ENCODE measurements at regions of chrX and their contacts with region 1.

Region 1: GRCh38 chrX:124211312-124211942 is 121.0 kb upstream of the TEX13D start:
- DNase-seq: peak; percentile 3
- H3K4me3 Mint-ChIP-seq: no peak overlapping the region
- H3K27ac Mint-ChIP-seq: no peak overlapping the region
- H3K4me1 Mint-ChIP-seq: peaks cover 44% of the 10 kb centered on the region
- H3K27me3 Mint-ChIP-seq: peaks cover 5% of the 10 kb centered on the region

Region 2: DNA sequence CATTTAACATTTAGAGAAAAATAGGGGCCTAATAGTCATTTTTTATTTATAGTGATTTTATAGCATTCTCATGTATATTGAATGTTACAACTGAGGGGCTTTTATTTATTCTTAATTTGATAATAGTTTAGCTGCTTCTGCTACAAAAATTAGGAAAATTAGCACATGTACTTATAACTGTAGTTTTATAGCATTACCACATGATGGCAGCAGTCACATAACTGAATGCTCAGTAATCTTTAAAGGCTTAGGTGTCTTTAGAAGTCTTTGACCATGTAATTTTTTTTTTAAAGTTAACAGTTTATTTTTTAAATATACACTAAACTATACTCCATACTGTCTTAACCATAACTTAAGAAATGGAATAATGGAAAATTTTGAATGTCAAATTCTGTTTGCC is 113.3 kb before region 1 on chrX:
- intact Hi-C with region 1: loop called (anchors 5 kb)
- DNase-seq: no peak
- H3K4me3 Mint-ChIP-seq: no peak overlapping the region
- H3K27ac Mint-ChIP-seq: no peak overlapping the region
- H3K4me1 Mint-ChIP-seq: no peaks in the 10 kb centered on the region
- H3K27me3 Mint-ChIP-seq: no peaks in the 10 kb centered on the region

Region 3: GRCh38 chrX:124257924-124258702 is 46.7 kb after region 1 on chrX:
- intact Hi-C with region 1: loop called (anchors 2 kb)
- DNase-seq: no peak
- H3K4me3 Mint-ChIP-seq: no peak overlapping the region
- H3K27ac Mint-ChIP-seq: peak overlapping the region; percentile 27
- H3K4me1 Mint-ChIP-seq: peaks cover 13% of the 10 kb centered on the region
- H3K27me3 Mint-ChIP-seq: no peaks in the 10 kb centered on the region

Region 4: DNA sequence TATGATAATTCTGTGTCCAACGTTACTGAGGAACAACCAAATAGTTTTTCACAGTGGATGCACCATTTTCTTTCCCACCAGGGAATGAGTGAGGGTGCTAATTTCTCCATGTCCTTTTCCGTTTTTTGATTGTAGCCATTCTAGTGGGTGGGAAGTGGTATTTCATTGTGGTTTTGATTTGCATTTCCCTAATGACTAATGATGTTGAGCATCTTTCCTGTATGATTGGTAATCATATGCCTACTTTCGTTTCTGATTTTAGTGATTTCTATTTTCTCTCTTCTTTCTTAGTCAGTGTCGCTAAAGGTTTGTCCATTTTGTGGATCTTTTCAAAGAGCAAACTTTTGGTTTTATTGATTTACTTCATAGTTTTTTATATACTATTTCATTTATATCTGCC is 89.0 kb after region 1 on chrX:
- intact Hi-C with region 1: loop called (anchors 1 kb)
- DNase-seq: no peak
- H3K4me3 Mint-ChIP-seq: peak overlapping the region; percentile 9
- H3K27ac Mint-ChIP-seq: peak overlapping the region; percentile 68
- H3K4me1 Mint-ChIP-seq: peaks cover 17% of the 10 kb centered on the region
- H3K27me3 Mint-ChIP-seq: no peaks in the 10 kb centered on the region

Measured in activated T-helper 1 cell treated with anti-CD3 and anti-CD28 coated beads, Interleukin-12 subunit alpha, Interleukin-12 subunit beta, Interleukin-2, Interleukin-4 antibody, amounts not matched to agents 30 ng/mL and 10 ng/mL and 1 ng/mL, durations not matched to agents 14 hours and 24 hours and 36 hours (primary cell).